Activated CD8-positive, alpha-beta T cell treated with anti-CD3 and anti-CD28 coated beads for 36 hours (primary cell): ENCODE measurements at regions of chr20 and their contacts with region 1.

Region 1: GRCh38 chr20:45011108-45011526 is 44.8 kb downstream of the STK4 start:
- DNase-seq: peak; percentile 76
- ATAC-seq: peak; percentile 82
- H3K4me3 Mint-ChIP-seq: no peak overlapping the region
- H3K27ac Mint-ChIP-seq: no peak overlapping the region
- H3K4me1 Mint-ChIP-seq: peaks cover 57% of the 10 kb centered on the region
- H3K27me3 Mint-ChIP-seq: no peaks in the 10 kb centered on the region
- CTCF ChIP-seq: peak; percentile 75

Region 2: DNA sequence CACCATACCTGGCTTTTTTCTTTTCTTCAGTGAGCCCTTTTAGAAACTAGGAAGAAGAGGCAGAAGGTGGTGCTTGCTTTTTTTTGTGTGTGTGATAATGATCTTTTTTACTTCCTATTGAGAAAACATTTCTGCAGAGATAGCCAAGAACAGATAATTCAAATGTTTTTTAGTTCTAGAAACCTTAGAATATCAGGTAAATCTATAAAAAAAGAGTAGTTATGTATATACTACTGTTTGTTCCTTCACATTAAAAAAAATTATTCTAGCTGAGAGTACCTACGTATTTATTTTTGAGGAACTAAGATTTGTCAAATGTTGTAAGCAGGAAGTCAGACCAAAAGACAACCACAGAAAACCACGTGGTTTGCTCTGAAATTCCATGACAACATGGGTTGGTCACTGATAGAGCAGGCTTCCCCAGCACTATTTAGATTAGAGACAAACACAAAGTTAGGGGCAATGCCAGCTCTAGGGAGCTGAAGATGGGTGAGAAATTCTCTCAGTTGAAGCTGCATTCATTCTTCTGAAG is 32.0 kb before region 1 on chr20:
- CTCF ChIA-PET with region 1: interaction called, 11 read pairs
- POLR2A ChIA-PET with region 1: interaction called, 4 read pairs
- intact Hi-C with region 1: no loop called
- DNase-seq: peak; percentile 86
- ATAC-seq: peak; percentile 82
- H3K4me3 Mint-ChIP-seq: peak overlapping the region; percentile 50
- H3K27ac Mint-ChIP-seq: peak overlapping the region; percentile 96
- H3K4me1 Mint-ChIP-seq: peaks cover 83% of the 10 kb centered on the region
- H3K27me3 Mint-ChIP-seq: no peaks in the 10 kb centered on the region
- CTCF ChIP-seq: no peak

Region 3: GRCh38 chr20:44997171-44998067 is 13.7 kb before region 1 on chr20:
- CTCF ChIA-PET with region 1: interaction called, 29 read pairs
- POLR2A ChIA-PET with region 1: interaction called, 5 read pairs
- intact Hi-C with region 1: no loop called
- DNase-seq: peak; percentile 31
- ATAC-seq: peak; percentile 40
- H3K4me3 Mint-ChIP-seq: no peak overlapping the region
- H3K27ac Mint-ChIP-seq: peak overlapping the region; percentile 90
- H3K4me1 Mint-ChIP-seq: peaks cover 67% of the 10 kb centered on the region
- H3K27me3 Mint-ChIP-seq: no peaks in the 10 kb centered on the region
- CTCF ChIP-seq: no peak

Region 4: GRCh38 chr20:45088247-45088646 is 77.1 kb after region 1 on chr20:
- CTCF ChIA-PET with region 1: interaction called, 11 read pairs
- POLR2A ChIA-PET with region 1: no interaction called
- intact Hi-C with region 1: no loop called
- DNase-seq: no peak
- ATAC-seq: no peak
- H3K4me3 Mint-ChIP-seq: no peak overlapping the region
- H3K27ac Mint-ChIP-seq: no peak overlapping the region
- H3K4me1 Mint-ChIP-seq: peaks cover 2% of the 10 kb centered on the region
- H3K27me3 Mint-ChIP-seq: no peaks in the 10 kb centered on the region
- CTCF ChIP-seq: no peak

Region 5: GRCh38 chr20:45111799-45112471 is 100.8 kb after region 1 on chr20:
- CTCF ChIA-PET with region 1: interaction called, 22 read pairs
- POLR2A ChIA-PET with region 1: no interaction called
- intact Hi-C with region 1: no loop called
- DNase-seq: peak; percentile 53
- ATAC-seq: peak; percentile 43
- H3K4me3 Mint-ChIP-seq: no peak overlapping the region
- H3K27ac Mint-ChIP-seq: no peak overlapping the region
- H3K4me1 Mint-ChIP-seq: peaks cover 17% of the 10 kb centered on the region
- H3K27me3 Mint-ChIP-seq: no peaks in the 10 kb centered on the region
- CTCF ChIP-seq: peak; percentile 76